ENCODE measurements at regions of chr12 and their contacts with region 1.

Region 1: GRCh38 chr12:12562585-12563261 is at the start of gene DUSP16:
- DNase-seq: peak; percentile 90 to 93 (median 91)
- H3K4me3 ChIP-seq: peak within 1 kb of the TSS; percentile 73 to 80
- H3K4me3 Mint-ChIP-seq: peak within 1 kb of the TSS; percentile 92 to 95 (median 92)
- H3K27ac ChIP-seq: peak within 1 kb of the TSS; percentile 99
- H3K27ac Mint-ChIP-seq: peak within 1 kb of the TSS; percentile 95 to 99 (median 99)
- H3K4me1 ChIP-seq: peaks cover 43% of the 10 kb centered on the region
- H3K4me1 Mint-ChIP-seq: peaks cover 25 to 51% (median 37%) of the 10 kb centered on the region in 4 donors
- H3K27me3 ChIP-seq: no peaks in the 10 kb centered on the region
- H3K27me3 Mint-ChIP-seq: no peaks in the 10 kb centered on the region
- total RNA-seq, gene DUSP16: 122 to 125 TPM

Region 2: DNA sequence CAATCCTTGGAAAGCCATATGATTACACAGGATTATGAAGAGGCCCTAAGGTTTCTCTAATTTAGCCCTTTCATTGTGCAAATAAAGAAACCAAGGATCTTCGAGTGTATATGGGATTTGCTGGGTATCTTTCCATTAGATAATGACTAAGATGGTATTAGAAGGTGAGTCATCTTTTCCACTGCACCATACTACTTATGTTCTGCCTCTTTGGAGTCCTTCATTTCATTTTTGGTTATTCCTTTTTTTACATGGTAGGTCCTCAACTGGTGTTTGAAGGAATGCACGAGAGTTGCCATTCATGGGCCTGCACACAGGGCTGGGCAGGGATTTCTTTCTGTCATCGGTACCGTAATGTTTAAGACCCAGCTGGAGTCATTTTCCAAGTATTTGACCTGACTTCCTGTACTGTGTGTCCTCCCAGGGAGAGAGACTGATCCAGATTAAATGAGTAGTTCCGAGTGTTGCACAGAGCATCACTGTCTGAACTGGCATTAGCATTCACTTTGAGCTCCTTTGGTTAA is 120.1 kb before region 1 on chr12:
- CTCF ChIA-PET with region 1: interaction called, 3 read pairs
- POLR2A ChIA-PET with region 1: interaction called, 24 read pairs
- intact Hi-C with region 1: loop called (anchors 2 kb)
- DNase-seq: no peak
- H3K4me3 ChIP-seq: no peak overlapping the region
- H3K4me3 Mint-ChIP-seq: peak overlapping the region in 6 of 8 donors; percentile 8 to 85 (median 70)
- H3K27ac ChIP-seq: peak overlapping the region; percentile 65
- H3K27ac Mint-ChIP-seq: peak overlapping the region; percentile 90 to 99 (median 98)
- H3K4me1 ChIP-seq: peaks cover 95% of the 10 kb centered on the region
- H3K4me1 Mint-ChIP-seq: peaks cover 68 to 93% (median 80%) of the 10 kb centered on the region in 4 donors
- H3K27me3 ChIP-seq: no peaks in the 10 kb centered on the region
- H3K27me3 Mint-ChIP-seq: no peaks in the 10 kb centered on the region

Region 3: DNA sequence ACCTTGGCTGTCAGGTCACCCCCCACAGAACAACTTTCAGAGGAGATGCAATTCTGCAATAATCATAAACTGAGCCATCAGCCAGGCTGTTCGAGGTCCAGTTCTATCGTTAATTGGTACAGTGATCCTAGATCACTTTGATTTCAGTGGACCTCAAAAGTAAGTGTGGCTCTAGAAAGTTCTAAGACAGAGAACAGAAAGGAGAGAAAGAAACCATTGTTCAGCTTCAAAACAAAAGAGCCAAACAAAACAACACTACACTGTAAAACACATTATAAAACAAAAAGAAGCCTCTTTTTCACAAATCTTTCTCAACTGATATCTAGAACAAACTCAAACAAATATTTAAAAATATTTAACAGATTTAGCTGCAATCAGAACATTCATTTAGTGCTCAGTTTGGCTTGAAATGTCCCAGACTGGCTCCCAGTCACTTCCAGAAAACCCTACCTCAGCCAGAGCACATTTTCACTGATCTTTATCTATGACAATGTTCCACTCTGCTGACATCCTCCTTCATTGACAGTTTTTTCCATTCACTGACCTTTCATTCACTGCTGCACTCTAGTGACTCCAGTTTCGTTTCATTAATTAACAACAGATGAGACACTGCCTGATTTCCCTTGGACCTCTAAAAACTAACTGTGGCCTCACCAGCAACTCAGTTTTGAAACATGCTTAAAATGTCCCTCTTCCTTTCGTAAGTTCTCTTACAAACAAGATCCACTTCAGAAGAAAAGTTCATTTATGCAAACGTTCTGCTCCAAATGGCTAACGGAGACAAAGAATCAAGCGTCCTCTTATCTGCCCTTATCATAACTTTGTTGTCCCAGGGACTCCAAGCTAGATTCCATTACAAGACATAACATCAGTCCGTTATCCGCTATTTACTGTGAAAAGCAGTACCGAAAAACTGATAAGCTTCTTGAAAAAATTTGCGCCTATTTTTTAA is 56.9 kb before region 1 on chr12:
- CTCF ChIA-PET with region 1: interaction called, 14 read pairs
- POLR2A ChIA-PET with region 1: interaction called, 22 read pairs
- intact Hi-C with region 1: loop called (anchors 2 kb)
- DNase-seq: peak in 4 of 5 donors; percentile 28 to 42 (median 32)
- H3K4me3 ChIP-seq: no peak overlapping the region
- H3K4me3 Mint-ChIP-seq: peak overlapping the region in 7 of 8 donors; percentile 37 to 84 (median 73)
- H3K27ac ChIP-seq: peak overlapping the region; percentile 48
- H3K27ac Mint-ChIP-seq: peak overlapping the region; percentile 66 to 95 (median 90)
- H3K4me1 ChIP-seq: peaks cover 65% of the 10 kb centered on the region
- H3K4me1 Mint-ChIP-seq: peaks cover 53 to 77% (median 61%) of the 10 kb centered on the region in 4 donors
- H3K27me3 ChIP-seq: no peaks in the 10 kb centered on the region
- H3K27me3 Mint-ChIP-seq: no peaks in the 10 kb centered on the region

Region 4: GRCh38 chr12:12611512-12612306 is 49.0 kb after region 1 on chr12 and contains the start of gene CREBL2:
- CTCF ChIA-PET with region 1: interaction called, 8 read pairs
- POLR2A ChIA-PET with region 1: interaction called, 19 read pairs
- intact Hi-C with region 1: loop called (anchors 1 kb)
- DNase-seq: peak; percentile 88 to 89 (median 88)
- H3K4me3 ChIP-seq: peak within 1 kb of the TSS; percentile 92 to 97
- H3K4me3 Mint-ChIP-seq: peak within 1 kb of the TSS; percentile 92 to 99 (median 95)
- H3K27ac ChIP-seq: peak within 1 kb of the TSS; percentile 77
- H3K27ac Mint-ChIP-seq: peak within 1 kb of the TSS; percentile 93 to 99 (median 99)
- H3K4me1 ChIP-seq: peaks cover 66% of the 10 kb centered on the region
- H3K4me1 Mint-ChIP-seq: peaks cover 34 to 73% (median 54%) of the 10 kb centered on the region in 4 donors
- H3K27me3 ChIP-seq: no peaks in the 10 kb centered on the region
- H3K27me3 Mint-ChIP-seq: no peaks in the 10 kb centered on the region
- total RNA-seq, gene CREBL2: 51.0 to 52.0 TPM

Region 5: GRCh38 chr12:12704593-12705230 is 142.0 kb after region 1 on chr12:
- CTCF ChIA-PET with region 1: interaction called, 3 read pairs
- POLR2A ChIA-PET with region 1: interaction called, 3 read pairs
- intact Hi-C with region 1: loop called (anchors 2 kb)
- DNase-seq: peak in 4 of 5 donors; percentile 36 to 58 (median 48)
- H3K4me3 ChIP-seq: no peak overlapping the region
- H3K4me3 Mint-ChIP-seq: peak overlapping the region in 6 of 8 donors; percentile 2 to 84 (median 36)
- H3K27ac ChIP-seq: no peak overlapping the region
- H3K27ac Mint-ChIP-seq: peak overlapping the region in 5 of 7 donors; percentile 50 to 88 (median 73)
- H3K4me1 ChIP-seq: peaks cover 37% of the 10 kb centered on the region
- H3K4me1 Mint-ChIP-seq: peaks cover 14 to 32% (median 20%) of the 10 kb centered on the region in 4 donors
- H3K27me3 ChIP-seq: no peaks in the 10 kb centered on the region
- H3K27me3 Mint-ChIP-seq: no peaks in the 10 kb centered on the region

Region 6: DNA sequence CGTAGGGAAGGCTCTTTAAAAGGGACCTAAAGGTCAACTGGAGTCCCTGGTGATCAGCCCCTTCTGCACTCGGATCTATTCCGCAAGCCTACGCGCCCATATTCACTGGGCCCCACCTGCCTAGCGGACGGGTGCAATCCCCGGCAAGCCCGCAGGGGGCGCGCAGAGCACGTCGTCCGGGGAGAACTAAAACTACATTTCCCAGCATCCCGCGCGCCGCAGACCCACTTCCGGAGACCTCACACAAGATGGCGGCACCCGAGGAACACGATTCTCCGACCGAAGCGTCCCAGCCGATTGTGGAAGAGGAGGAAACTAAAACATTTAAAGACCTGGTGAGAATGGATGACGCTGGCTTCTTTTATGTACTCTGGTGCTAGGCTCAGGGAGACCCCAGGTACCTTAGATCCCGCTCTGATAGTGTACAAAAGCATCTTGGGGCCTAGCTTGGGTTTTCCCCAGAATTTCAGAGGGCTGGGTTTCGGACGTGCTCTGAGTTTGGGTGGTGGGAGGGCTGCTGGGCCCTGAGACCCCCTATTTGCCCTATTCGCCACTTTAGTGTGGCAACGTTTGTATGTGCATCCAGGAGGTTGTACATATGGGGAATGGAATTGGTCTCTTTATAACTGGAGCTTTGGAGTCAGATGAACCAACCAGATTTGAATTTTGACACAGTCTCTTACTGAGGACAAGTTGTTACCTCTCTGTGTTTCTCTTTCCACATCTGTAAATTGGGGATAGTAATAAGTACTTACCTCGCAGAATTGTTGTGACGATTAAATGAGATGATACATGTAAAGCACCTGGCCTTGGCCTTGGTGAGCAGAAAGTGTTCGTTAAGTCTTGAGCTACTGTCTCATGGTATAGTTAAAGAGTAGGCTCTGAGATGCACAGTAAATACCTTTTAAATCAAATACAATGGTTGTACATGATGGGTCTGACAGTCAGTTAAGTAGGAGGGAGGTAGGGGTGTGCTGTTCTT is 250.7 kb after region 1 on chr12 and contains the start of gene DDX47:
- CTCF ChIA-PET with region 1: no interaction called
- POLR2A ChIA-PET with region 1: interaction called, 4 read pairs
- intact Hi-C with region 1: loop called (anchors 5 kb)
- DNase-seq: peak; percentile 93 to 97 (median 95)
- H3K4me3 ChIP-seq: peak within 1 kb of the TSS; percentile 87 to 92
- H3K4me3 Mint-ChIP-seq: peak within 1 kb of the TSS; percentile 89 to 98 (median 98)
- H3K27ac ChIP-seq: peak within 1 kb of the TSS; percentile 95
- H3K27ac Mint-ChIP-seq: peak within 1 kb of the TSS; percentile 88 to 99 (median 98)
- H3K4me1 ChIP-seq: peaks cover 53% of the 10 kb centered on the region
- H3K4me1 Mint-ChIP-seq: peaks cover 41 to 76% (median 58%) of the 10 kb centered on the region in 4 donors
- H3K27me3 ChIP-seq: no peaks in the 10 kb centered on the region
- H3K27me3 Mint-ChIP-seq: no peaks in the 10 kb centered on the region
- total RNA-seq, gene DDX47: 66.5 to 66.6 TPM